ENCODE measurements at regions of chr2 and their contacts with region 1.

Region 1: GRCh38 chr2:46296840-46297545 is at the start of gene EPAS1:
- DNase-seq: peak; percentile 71 to 88 (median 75)
- H3K4me3 ChIP-seq: peak within 1 kb of the TSS; percentile 45 to 72
- H3K4me3 Mint-ChIP-seq: peak within 1 kb of the TSS; percentile 87 to 96 (median 92)
- H3K27ac ChIP-seq: no peak within 1 kb of the TSS
- H3K27ac Mint-ChIP-seq: peak within 1 kb of the TSS; percentile 68 to 94 (median 89)
- H3K4me1 ChIP-seq: peaks cover 29% of the 10 kb centered on the region
- H3K4me1 Mint-ChIP-seq: peaks cover 14 to 47% (median 24%) of the 10 kb centered on the region in 4 donors
- H3K27me3 ChIP-seq: peaks cover 21% of the 10 kb centered on the region
- H3K27me3 Mint-ChIP-seq: peaks cover 22 to 26% of the 10 kb centered on the region in 2 donors
- total RNA-seq, gene EPAS1: 2.3 to 2.7 TPM

Region 2: GRCh38 chr2:46239847-46240181 is 57.2 kb before region 1 on chr2:
- CTCF ChIA-PET with region 1: no interaction called
- POLR2A ChIA-PET with region 1: interaction called, 5 read pairs
- intact Hi-C with region 1: loop called (anchors 5 kb)
- DNase-seq: peak; percentile 50 to 80 (median 60)
- H3K4me3 ChIP-seq: no peak overlapping the region
- H3K4me3 Mint-ChIP-seq: peak overlapping the region in 5 of 8 donors; percentile 33 to 72 (median 70)
- H3K27ac ChIP-seq: peak overlapping the region; percentile 15
- H3K27ac Mint-ChIP-seq: peak overlapping the region; percentile 36 to 96 (median 90)
- H3K4me1 ChIP-seq: peaks cover 18% of the 10 kb centered on the region
- H3K4me1 Mint-ChIP-seq: peaks cover 26 to 45% (median 32%) of the 10 kb centered on the region in 4 donors
- H3K27me3 ChIP-seq: no peaks in the 10 kb centered on the region
- H3K27me3 Mint-ChIP-seq: no peaks in the 10 kb centered on the region

Region 3: DNA sequence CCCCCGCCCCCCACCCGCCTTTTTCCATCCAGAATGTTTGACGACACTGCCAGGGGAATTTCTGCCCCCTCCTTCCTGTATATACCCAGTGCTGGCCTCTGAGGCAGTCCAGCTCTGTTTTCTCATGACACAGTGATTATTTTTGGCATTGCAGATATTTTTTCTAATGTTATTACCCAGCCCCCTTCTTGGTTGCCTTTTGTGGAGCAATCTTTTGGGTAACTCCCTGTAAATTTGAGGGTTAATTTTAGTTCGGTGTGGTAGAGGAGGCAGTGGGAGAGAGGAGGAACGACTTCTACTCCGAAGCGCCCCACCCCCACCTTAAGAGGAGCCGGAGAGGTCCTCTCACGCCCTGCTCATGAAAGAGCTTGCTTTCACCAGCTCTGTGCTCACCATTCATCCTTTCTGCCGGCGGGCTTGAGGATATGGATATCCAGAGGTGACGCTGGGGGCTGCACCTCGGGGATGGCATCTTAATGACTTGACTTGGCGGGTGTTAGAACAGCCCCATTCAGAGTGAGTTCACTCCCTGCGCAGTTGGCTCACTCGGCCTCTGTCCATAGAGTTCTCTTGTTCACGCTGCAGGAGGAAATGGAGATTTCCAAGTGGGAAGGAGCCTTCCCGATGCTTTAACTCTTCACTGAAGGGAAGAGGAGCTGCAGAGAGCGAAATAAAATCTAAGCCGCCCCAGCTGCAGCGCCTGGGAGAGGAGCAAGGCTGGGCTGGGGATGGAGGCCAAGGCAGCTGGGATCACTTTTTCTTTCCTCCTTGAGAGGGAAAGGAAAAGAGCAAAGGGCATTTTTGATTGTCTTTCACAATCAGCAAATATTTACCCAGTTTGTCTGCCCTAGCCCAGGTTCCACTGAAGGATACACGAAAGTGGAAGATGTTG is 38.6 kb after region 1 on chr2:
- CTCF ChIA-PET with region 1: no interaction called
- POLR2A ChIA-PET with region 1: no interaction called
- intact Hi-C with region 1: no loop called
- DNase-seq: no peak
- H3K4me3 ChIP-seq: no peak overlapping the region
- H3K4me3 Mint-ChIP-seq: no peak overlapping the region
- H3K27ac ChIP-seq: no peak overlapping the region
- H3K27ac Mint-ChIP-seq: peak overlapping the region in 2 of 7 donors; percentile 25 to 68
- H3K4me1 ChIP-seq: no peaks in the 10 kb centered on the region
- H3K4me1 Mint-ChIP-seq: peaks cover 0 to 26% (median 8%) of the 10 kb centered on the region in 4 donors
- H3K27me3 ChIP-seq: no peaks in the 10 kb centered on the region
- H3K27me3 Mint-ChIP-seq: peaks cover 0 to 6% of the 10 kb centered on the region in 2 donors

Region 4: GRCh38 chr2:46351750-46352138 is 54.8 kb after region 1 on chr2:
- CTCF ChIA-PET with region 1: interaction called, 3 read pairs
- POLR2A ChIA-PET with region 1: interaction called, 5 read pairs
- intact Hi-C with region 1: loop called (anchors 2 kb)
- DNase-seq: peak; percentile 74 to 82 (median 77)
- H3K4me3 ChIP-seq: peak overlapping the region; percentile 5 to 37
- H3K4me3 Mint-ChIP-seq: peak overlapping the region; percentile 78 to 95 (median 86)
- H3K27ac ChIP-seq: peak overlapping the region; percentile 27
- H3K27ac Mint-ChIP-seq: peak overlapping the region; percentile 86 to 96 (median 92)
- H3K4me1 ChIP-seq: peaks cover 55% of the 10 kb centered on the region
- H3K4me1 Mint-ChIP-seq: peaks cover 49 to 87% (median 72%) of the 10 kb centered on the region in 4 donors
- H3K27me3 ChIP-seq: no peaks in the 10 kb centered on the region
- H3K27me3 Mint-ChIP-seq: no peaks in the 10 kb centered on the region

Region 5: GRCh38 chr2:47782671-47783485 is 1485.9 kb after region 1 on chr2 and contains the start of gene MSH6:
- CTCF ChIA-PET with region 1: no interaction called
- POLR2A ChIA-PET with region 1: no interaction called
- intact Hi-C with region 1: loop called (anchors 10 kb)
- DNase-seq: peak; percentile 87 to 93 (median 92)
- H3K4me3 ChIP-seq: peak within 1 kb of the TSS; percentile 78 to 99
- H3K4me3 Mint-ChIP-seq: peak within 1 kb of the TSS; percentile 90 to 94 (median 92)
- H3K27ac ChIP-seq: peak within 1 kb of the TSS; percentile 94
- H3K27ac Mint-ChIP-seq: peak within 1 kb of the TSS; percentile 84 to 94 (median 92)
- H3K4me1 ChIP-seq: peaks cover 36% of the 10 kb centered on the region
- H3K4me1 Mint-ChIP-seq: peaks cover 13 to 33% (median 23%) of the 10 kb centered on the region in 4 donors
- H3K27me3 ChIP-seq: no peaks in the 10 kb centered on the region
- H3K27me3 Mint-ChIP-seq: no peaks in the 10 kb centered on the region
- total RNA-seq, gene MSH6: 39.4 to 49.9 TPM

Measured in CD4-positive, alpha-beta memory T cell (primary cell).